ENCODE measurements at regions of chr3 and their contacts with region 1.

Region 1: DNA sequence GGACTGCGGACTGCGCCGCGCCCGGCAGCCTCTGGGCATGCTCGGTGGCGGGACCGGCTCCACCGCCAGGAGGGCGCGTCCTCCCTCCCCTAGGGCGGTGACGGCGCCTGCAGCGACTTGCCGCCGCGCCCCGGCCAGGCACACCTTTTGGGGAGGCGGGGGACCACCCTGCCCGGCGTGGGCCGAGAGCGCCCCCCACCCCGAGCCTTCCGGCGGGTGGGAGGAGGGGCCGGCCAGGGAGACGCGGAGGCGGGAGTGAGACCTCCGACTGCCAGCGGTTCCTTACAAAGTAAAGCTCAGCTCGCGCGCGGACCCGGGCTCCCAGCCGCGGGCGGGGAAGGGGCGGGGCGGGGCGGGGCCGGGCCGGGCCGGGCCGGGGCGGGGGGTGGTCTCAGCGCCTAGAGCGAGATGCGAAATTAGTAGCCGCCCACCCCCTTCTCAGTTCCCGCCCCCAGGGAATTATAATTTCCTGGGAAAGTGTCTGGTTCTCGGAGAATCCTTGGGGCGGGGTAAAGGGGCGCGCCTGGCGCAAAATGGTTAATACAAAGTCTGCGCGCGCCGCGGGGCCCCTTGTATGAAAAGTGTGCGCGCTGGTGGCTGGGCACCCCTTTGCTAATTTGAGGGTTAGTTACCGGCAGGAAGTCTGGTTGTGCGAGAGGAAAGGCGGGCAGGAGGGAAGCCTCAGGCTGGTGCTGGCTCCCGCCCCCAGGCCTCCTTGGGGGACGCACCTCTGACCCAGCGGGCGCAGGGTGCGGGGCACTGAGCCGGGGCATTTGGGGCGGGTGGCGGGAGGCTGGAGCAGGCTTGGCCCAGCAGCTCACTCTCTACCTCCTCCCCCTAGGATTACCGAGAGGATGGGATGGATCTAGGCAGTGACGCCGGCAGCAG is 224.8 kb upstream of the IL12A start:
- DNase-seq: peak; percentile 69
- H3K4me3 ChIP-seq: peak overlapping the region; percentile 51 to 59
- H3K27ac ChIP-seq: peak overlapping the region; percentile 88 to 89
- H3K4me1 ChIP-seq: no peaks in the 10 kb centered on the region
- H3K27me3 ChIP-seq: no peaks in the 10 kb centered on the region
- CTCF ChIP-seq: peak in 2 of 4 experiments; percentile 63 to 67
- POLR2A ChIP-seq: peak; percentile 14

Region 2: DNA sequence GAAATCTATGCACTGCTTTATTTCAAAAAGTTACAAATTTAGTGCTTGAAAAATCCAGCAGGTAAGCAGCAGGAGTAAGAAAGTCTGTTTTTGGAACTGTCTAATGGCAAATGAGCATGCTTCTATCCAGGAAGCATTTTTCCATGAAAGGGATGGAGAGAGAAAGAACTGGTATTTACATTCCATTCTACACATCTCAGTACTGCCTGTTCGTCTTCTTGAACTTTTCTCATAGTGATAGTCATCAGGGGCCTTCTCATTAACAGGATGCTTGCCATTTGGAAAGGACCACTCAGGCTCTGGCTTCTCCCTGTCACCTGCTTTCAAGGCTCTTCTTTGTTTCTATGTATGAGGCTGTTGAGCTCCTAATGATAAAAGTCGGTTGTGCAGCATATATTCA is 42.5 kb before region 1 on chr3:
- intact Hi-C with region 1: no loop called
- DNase-seq: no peak
- H3K4me3 ChIP-seq: no peak overlapping the region
- H3K27ac ChIP-seq: no peak overlapping the region
- H3K4me1 ChIP-seq: no peaks in the 10 kb centered on the region
- H3K27me3 ChIP-seq: no peaks in the 10 kb centered on the region
- CTCF ChIP-seq: no peak
- POLR2A ChIP-seq: no peak

Region 3: GRCh38 chr3:159732172-159733111 is 31.4 kb before region 1 on chr3:
- intact Hi-C with region 1: loop called (anchors 2 kb)
- DNase-seq: peak; percentile 7
- H3K4me3 ChIP-seq: no peak overlapping the region
- H3K27ac ChIP-seq: no peak overlapping the region
- H3K4me1 ChIP-seq: no peaks in the 10 kb centered on the region
- H3K27me3 ChIP-seq: no peaks in the 10 kb centered on the region
- CTCF ChIP-seq: no peak
- POLR2A ChIP-seq: no peak

Region 4: DNA sequence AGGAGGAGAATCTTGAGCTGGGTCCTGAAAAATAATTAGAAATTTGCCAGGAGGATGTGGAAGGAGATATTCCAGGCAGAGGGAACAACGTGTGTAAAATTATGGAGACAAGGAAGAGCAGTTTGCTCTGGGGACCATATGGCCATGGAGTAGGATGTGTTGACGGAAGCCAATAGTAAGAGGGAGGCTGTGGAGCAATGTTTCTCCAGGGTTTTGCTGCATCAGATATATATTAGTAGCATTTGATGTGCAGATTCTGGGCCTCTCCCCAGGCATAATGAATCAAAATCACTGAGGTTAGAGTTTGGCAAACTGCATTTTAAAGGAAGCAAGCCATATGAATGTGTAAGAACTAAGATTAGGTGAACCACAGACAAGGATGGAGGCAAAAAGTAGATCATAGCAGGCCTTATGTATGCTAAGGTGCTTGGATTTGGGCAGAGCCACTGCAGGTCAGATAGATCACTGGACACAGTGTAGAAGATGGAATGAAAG is 31.9 kb after region 1 on chr3:
- intact Hi-C with region 1: loop called (anchors 2 kb)
- DNase-seq: no peak
- H3K4me3 ChIP-seq: no peak overlapping the region
- H3K27ac ChIP-seq: peak overlapping the region; percentile 26 to 30
- H3K4me1 ChIP-seq: no peaks in the 10 kb centered on the region
- H3K27me3 ChIP-seq: no peaks in the 10 kb centered on the region
- CTCF ChIP-seq: no peak
- POLR2A ChIP-seq: no peak

Region 5: DNA sequence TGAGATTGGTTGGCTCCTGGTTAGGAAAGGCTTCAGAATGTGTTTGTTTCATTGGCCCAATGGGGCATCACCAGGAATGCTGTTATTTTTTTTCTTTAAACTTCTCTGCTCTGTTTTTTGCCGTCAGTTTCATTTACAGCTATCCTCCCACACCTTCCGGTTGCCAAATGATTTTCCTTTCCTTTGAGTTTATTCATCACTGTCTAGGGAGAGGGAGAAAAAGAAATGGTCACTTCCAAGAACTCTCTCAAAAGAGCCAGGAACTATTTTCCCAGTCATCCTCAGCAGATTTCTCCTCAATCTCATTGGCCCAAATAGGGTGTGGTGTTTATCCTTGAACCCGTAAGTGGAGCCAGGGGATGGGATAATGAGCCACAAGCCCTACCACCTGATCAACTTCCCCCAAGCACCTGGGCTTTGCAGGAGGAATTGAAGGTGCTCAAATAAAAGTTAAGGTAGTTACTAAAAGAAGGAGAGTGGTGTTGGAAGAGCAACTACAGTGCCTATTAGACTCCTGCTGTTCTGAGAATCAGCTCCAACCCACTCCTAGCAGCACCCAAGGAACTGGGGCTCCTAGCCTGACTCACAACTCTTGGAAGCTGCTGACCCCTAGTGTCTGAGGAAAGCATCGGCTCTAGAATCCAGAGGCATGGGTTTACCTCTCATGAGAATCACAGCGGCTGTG is 41.0 kb after region 1 on chr3:
- intact Hi-C with region 1: loop called (anchors 2 kb)
- DNase-seq: peak; percentile 64
- H3K4me3 ChIP-seq: no peak overlapping the region
- H3K27ac ChIP-seq: no peak overlapping the region
- H3K4me1 ChIP-seq: no peaks in the 10 kb centered on the region
- H3K27me3 ChIP-seq: no peaks in the 10 kb centered on the region
- CTCF ChIP-seq: peak; percentile 56 to 88 (median 76)
- POLR2A ChIP-seq: no peak

Region 6: GRCh38 chr3:159872374-159873109 is 108.7 kb after region 1 on chr3:
- intact Hi-C with region 1: loop called (anchors 5 kb)
- DNase-seq: no peak
- H3K4me3 ChIP-seq: no peak overlapping the region
- H3K27ac ChIP-seq: no peak overlapping the region
- H3K4me1 ChIP-seq: no peaks in the 10 kb centered on the region
- H3K27me3 ChIP-seq: no peaks in the 10 kb centered on the region
- CTCF ChIP-seq: peak in 1 of 4 experiments; percentile 22
- POLR2A ChIP-seq: no peak

Measured in prostate gland (tissue), 2 donors.